ENCODE measurements at regions of chr2 and their contacts with region 1.

Region 1: DNA sequence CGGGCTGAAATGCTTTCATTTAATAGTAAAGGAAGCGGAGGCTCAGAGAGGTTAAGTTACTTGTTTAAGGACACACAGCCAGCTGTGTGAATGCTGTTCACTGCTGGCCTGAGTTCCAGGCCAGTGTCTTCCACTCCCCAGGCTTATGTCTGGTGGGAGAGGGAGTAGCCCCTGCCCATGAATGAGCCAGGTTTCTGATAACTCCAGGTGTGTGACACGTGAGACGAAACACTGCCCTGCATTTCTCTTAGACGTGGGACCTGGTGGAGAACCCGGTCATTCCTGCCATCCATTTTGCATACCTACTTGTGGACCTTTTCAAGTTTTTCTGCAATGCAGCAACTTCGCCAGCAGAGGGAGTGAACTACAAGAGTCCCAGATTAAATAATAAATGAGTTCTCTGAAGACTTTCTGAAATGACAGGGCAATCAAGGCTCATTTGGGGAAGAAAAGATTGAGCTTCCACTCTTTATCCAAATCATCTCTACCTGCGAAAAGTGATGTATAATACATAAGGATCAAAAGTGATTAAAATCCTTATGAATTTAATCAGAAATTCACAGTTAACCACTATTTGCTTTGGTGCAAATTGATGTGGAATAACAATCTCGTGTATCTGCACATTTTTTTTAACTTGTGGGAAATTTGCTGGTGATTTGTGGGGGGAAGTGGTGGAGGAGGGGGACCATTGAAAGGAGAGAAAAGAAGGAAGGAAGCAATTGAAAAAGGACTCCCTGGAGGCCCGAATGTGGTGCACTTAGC is 79.4 kb upstream of the ASB18 start:
- DNase-seq: peak in 39 of 42 donors; percentile 32 to 87 (median 62)

Region 2: GRCh38 chr2:236026841-236027240 is 316.7 kb before region 1 on chr2:
- intact Hi-C with region 1: no loop called
- DNase-seq: no peak

Region 3: GRCh38 chr2:236576087-236576486 is 232.5 kb after region 1 on chr2:
- intact Hi-C with region 1: loop called (anchors 10 kb)
- DNase-seq: no peak